Activated CD8-positive, alpha-beta T cell treated with anti-CD3 and anti-CD28 coated beads for 36 hours (primary cell): ENCODE measurements at regions of chrX and their contacts with region 1.

Region 1: GRCh38 chrX:154397819-154398724 is at the start of gene RPL10:
- DNase-seq: peak; percentile 93
- ATAC-seq: peak; percentile 84
- H3K4me3 Mint-ChIP-seq: peak within 1 kb of the TSS; percentile 98
- H3K27ac Mint-ChIP-seq: peak within 1 kb of the TSS; percentile 100
- H3K4me1 Mint-ChIP-seq: peaks cover 2% of the 10 kb centered on the region
- H3K27me3 Mint-ChIP-seq: no peaks in the 10 kb centered on the region
- CTCF ChIP-seq: no peak
- total RNA-seq, gene RPL10: 3,574 to 3,675 TPM

Region 2: GRCh38 chrX:153971450-153972367 is 426.4 kb before region 1 on chrX and contains the start of gene HCFC1:
- CTCF ChIA-PET with region 1: no interaction called
- POLR2A ChIA-PET with region 1: interaction called, 14 read pairs
- intact Hi-C with region 1: no loop called
- DNase-seq: peak; percentile 93
- ATAC-seq: peak; percentile 32
- H3K4me3 Mint-ChIP-seq: peak within 1 kb of the TSS; percentile 93
- H3K27ac Mint-ChIP-seq: peak within 1 kb of the TSS; percentile 100
- H3K4me1 Mint-ChIP-seq: peaks cover 23% of the 10 kb centered on the region
- H3K27me3 Mint-ChIP-seq: no peaks in the 10 kb centered on the region
- CTCF ChIP-seq: no peak
- total RNA-seq, gene HCFC1: 115 to 116 TPM

Region 3: DNA sequence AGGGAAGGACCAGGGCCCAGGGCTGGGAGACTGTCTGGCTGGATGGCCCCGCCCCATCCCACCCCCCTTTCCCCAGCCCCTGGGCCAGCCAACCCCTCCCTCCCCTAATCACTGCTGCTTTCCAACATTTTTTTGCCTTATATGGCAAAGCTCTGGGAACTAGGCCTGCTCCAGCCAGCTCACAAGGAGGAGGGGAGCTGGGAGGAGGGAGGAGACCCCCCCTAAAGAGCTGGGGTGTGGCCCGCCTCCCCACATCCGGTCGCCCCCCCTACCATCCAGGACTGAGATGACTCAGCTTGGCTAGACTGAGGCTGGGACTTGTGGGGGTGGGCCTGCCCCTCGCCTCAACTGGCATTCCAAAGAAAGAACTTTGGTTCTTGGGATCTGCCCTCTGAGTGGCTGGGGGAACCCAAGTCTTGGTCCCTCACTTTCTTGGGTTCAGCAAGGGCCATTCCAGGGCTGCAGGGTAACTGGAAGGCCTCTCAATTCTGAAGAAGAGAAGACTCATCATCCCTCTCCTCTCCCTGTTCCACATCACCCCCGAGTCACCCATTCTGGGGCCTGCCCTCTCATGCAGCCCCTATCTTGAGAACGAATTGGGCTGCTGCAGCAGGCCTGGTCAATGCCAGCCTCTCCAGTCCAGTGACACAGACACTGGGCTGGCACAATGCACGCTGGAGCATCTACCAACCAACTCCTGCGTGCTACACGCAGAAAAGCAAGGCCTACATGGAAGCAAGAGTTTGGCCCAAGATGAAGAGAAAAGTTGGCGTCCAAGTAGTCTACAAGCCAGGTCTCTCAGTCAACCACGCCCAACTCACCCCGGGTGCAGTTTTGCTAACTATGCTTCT is 28.4 kb before region 1 on chrX:
- CTCF ChIA-PET with region 1: interaction called, 9 read pairs
- POLR2A ChIA-PET with region 1: interaction called, 30 read pairs
- intact Hi-C with region 1: no loop called
- DNase-seq: peak; percentile 81
- ATAC-seq: peak; percentile 8
- H3K4me3 Mint-ChIP-seq: peak overlapping the region; percentile 96
- H3K27ac Mint-ChIP-seq: peak overlapping the region; percentile 90
- H3K4me1 Mint-ChIP-seq: peaks cover 25% of the 10 kb centered on the region
- H3K27me3 Mint-ChIP-seq: no peaks in the 10 kb centered on the region
- CTCF ChIP-seq: no peak

Region 4: DNA sequence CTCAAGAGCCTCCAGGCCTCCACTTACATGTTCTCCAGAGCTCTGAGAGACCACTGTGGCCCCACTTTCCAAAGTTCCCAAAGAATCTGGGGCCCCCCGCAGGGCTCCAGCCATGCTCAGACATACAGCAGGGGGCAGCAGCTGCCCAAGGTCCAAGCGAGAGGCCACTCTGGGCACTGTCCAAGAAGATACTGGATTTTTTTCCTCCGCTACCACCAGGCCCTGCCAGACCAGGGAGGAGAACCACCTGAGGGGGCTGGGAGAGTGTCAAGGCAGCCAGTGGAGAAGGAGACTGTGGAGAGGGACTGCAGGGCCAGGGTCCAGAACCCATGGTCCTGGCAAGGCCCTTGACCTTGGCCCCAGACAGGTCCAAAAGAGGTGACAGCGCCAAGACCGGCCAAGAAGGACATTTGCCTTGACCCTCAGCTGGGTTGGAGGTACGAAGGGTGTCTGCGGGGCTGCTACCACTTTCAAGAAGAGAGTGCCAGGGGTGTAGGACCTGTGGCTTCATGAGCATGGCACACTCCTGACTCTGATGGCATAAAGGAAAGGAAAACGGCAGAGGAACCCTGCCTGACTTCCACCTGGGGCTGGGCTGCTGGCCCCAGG is 13.7 kb before region 1 on chrX:
- CTCF ChIA-PET with region 1: no interaction called
- POLR2A ChIA-PET with region 1: interaction called, 23 read pairs
- intact Hi-C with region 1: no loop called
- DNase-seq: no peak
- ATAC-seq: no peak
- H3K4me3 Mint-ChIP-seq: no peak overlapping the region
- H3K27ac Mint-ChIP-seq: peak overlapping the region; percentile 68
- H3K4me1 Mint-ChIP-seq: peaks cover 9% of the 10 kb centered on the region
- H3K27me3 Mint-ChIP-seq: no peaks in the 10 kb centered on the region
- CTCF ChIP-seq: no peak

Region 5: DNA sequence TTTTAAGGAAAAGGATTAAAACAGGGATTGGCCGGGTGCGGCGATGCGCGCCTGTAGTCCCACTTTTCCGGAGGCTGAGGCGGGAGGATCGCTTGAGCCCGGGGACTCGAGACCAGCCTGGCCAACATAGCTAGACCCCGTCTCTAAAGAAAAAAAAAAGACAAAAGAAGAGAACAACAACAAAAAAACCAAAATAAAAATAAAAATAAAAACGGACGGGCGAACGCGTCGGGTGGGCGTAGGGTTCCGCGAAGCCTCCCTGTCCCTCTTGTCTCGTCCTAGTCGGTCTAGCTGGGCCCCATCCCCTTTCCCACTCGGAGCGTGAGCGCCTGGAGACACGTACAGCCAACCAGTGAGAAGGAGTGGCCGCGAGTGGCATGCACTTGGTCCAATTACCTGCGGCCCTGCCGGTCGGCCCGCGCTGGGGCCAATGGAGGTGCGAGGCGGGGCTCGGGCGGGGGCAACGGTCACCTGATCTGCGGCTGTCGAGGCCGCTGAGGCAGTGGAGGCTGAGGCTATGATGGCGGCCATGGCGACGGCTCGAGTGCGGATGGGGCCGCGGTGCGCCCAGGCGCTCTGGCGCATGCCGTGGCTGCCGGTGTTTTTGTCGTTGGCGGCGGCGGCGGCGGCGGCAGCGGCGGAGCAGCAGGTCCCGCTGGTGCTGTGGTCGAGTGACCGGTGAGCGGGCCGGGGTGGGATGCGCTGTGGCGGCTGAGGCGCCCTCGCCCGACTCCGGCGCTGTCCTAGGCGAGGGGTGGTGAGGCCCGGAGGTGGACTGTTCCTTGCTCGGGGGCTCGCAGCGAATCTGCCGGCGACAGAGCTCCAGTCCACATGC is 30.3 kb after region 1 on chrX and contains the start of gene ATP6AP1:
- CTCF ChIA-PET with region 1: no interaction called
- POLR2A ChIA-PET with region 1: interaction called, 11 read pairs
- intact Hi-C with region 1: no loop called
- DNase-seq: peak; percentile 92
- ATAC-seq: peak; percentile 99
- H3K4me3 Mint-ChIP-seq: peak within 1 kb of the TSS; percentile 75
- H3K27ac Mint-ChIP-seq: peak within 1 kb of the TSS; percentile 69
- H3K4me1 Mint-ChIP-seq: peaks cover 19% of the 10 kb centered on the region
- H3K27me3 Mint-ChIP-seq: no peaks in the 10 kb centered on the region
- CTCF ChIP-seq: no peak
- total RNA-seq, gene ATP6AP1: 21.3 to 22.5 TPM

Region 6: GRCh38 chrX:154490414-154491083 is 92.5 kb after region 1 on chrX and contains the start of gene SLC10A3:
- CTCF ChIA-PET with region 1: interaction called, 5 read pairs
- POLR2A ChIA-PET with region 1: interaction called, 16 read pairs
- intact Hi-C with region 1: no loop called
- DNase-seq: peak; percentile 91
- ATAC-seq: peak; percentile 87
- H3K4me3 Mint-ChIP-seq: peak within 1 kb of the TSS; percentile 89
- H3K27ac Mint-ChIP-seq: peak within 1 kb of the TSS; percentile 90
- H3K4me1 Mint-ChIP-seq: peaks cover 19% of the 10 kb centered on the region
- H3K27me3 Mint-ChIP-seq: no peaks in the 10 kb centered on the region
- CTCF ChIP-seq: no peak
- total RNA-seq, gene SLC10A3: 13.2 to 14.1 TPM

Region 7: GRCh38 chrX:154541724-154542467 is 143.8 kb after region 1 on chrX:
- CTCF ChIA-PET with region 1: no interaction called
- POLR2A ChIA-PET with region 1: interaction called, 10 read pairs
- intact Hi-C with region 1: no loop called
- DNase-seq: peak; percentile 79
- ATAC-seq: peak; percentile 34
- H3K4me3 Mint-ChIP-seq: peak overlapping the region; percentile 79
- H3K27ac Mint-ChIP-seq: peak overlapping the region; percentile 97
- H3K4me1 Mint-ChIP-seq: peaks cover 51% of the 10 kb centered on the region
- H3K27me3 Mint-ChIP-seq: no peaks in the 10 kb centered on the region
- CTCF ChIP-seq: no peak